Lower leg skin (tissue), 4 donors: ENCODE measurements at regions of chr22 and their contacts with region 1.

Region 1: DNA sequence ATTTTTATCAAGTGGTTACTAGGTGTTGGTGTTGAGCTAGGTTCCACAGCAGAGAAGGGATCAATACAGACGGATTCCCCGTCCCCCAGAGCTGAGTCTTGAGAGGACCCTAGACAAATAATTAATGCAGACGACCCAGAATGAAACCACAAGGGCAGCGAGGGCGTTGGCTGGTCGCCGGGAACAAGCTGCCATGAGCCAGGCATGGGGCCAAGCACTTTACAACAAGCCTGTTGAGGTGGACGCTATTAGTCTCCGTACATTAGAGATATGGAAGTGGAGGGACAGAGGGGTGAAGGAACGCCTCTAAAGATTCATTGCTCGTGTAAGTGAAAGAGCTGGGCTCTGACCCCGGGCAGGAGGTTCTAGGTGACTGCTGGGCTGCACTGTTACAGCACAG is 77.1 kb upstream of the EIF3D start:
- DNase-seq: no peak
- H3K4me3 ChIP-seq: no peak overlapping the region
- CTCF ChIP-seq: no peak
- POLR2A ChIP-seq: no peak

Region 2: GRCh38 chr22:36636916-36637315 is 30.8 kb after region 1 on chr22:
- intact Hi-C with region 1: no loop called
- DNase-seq: no peak
- H3K4me3 ChIP-seq: no peak overlapping the region
- CTCF ChIP-seq: no peak
- POLR2A ChIP-seq: no peak

Region 3: GRCh38 chr22:37212167-37212906 is 606.2 kb after region 1 on chr22 and contains the start of gene SSTR3:
- intact Hi-C with region 1: no loop called
- DNase-seq: no peak
- H3K4me3 ChIP-seq: no peak within 1 kb of the TSS
- CTCF ChIP-seq: no peak
- POLR2A ChIP-seq: no peak
- total RNA-seq, gene SSTR3: not detected

Region 4: GRCh38 chr22:38338772-38339379 is 1732.8 kb after region 1 on chr22:
- intact Hi-C with region 1: loop called (anchors 10 kb)
- DNase-seq: peak in 1 of 2 donors; percentile 72
- H3K4me3 ChIP-seq: no peak overlapping the region
- CTCF ChIP-seq: no peak
- POLR2A ChIP-seq: no peak